GM12878 (cell line): ENCODE measurements at regions of chr17 and their contacts with region 1.

Region 1: GRCh38 chr17:8103549-8103948 is 14.8 kb downstream of the ALOXE3 start:
- DNase-seq: no peak
- ATAC-seq: no peak
- H3K4me3 ChIP-seq: no peak overlapping the region
- H3K27ac ChIP-seq: no peak overlapping the region
- H3K4me1 ChIP-seq: no peaks in the 10 kb centered on the region; the same call in 1 of the 2 replicates
- H3K27me3 ChIP-seq: no peaks in the 10 kb centered on the region
- CTCF ChIP-seq: no peak
- EP300 ChIP-seq: no peak
- POLR2A ChIP-seq: no peak
- RAD21 ChIP-seq: no peak

Region 2: DNA sequence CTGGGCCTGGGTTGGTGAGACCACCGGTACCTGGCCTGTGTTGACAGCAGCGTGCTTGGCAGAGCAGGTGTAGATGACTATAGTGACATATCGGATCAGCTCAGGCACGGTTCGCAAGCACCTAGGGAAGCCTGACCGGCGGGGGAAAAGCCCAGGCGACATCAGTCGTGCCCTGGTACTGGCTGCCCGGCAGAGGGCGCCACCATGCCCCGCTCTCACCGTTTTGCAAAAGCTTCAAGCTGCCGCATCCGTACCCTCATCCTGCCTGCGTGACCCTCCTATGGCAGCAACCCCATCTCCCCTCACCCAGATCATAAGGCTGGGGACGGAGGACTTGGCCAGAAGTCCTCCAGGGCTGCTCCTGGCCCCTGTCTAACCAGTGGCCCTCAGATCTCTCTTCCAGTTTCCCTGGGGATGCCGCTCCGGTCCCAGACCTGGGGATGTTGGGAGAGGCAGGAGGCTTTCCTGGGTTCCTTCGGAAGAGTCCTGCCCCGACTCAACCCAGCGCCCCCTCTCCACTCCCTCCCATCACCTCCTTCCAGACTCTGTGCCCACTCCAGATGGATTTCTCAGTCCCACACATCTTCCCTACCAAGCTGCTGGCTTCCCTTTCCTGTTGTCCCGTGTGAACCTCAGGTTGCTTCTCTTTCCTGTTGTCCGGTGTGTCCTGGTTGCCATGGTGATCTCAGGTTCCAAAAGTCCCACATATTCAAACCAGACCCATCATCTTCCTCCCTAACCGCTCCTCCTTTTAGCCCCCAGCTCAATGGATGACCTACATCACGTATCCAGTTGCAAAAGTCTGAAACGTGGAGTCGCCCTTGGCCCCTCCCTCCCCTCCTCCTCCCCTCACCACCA is 29.7 kb before region 1 on chr17:
- CTCF ChIA-PET with region 1: interaction called, 18 read pairs
- POLR2A ChIA-PET with region 1: no interaction called
- RAD21 ChIA-PET with region 1: interaction called, 8 read pairs
- SMC1A ChIA-PET with region 1: interaction called, 4 read pairs
- in situ Hi-C with region 1: no loop called
- intact Hi-C with region 1: no loop called
- DNase-seq: no peak
- ATAC-seq: peak; percentile 97
- H3K4me3 ChIP-seq: no peak overlapping the region
- H3K27ac ChIP-seq: no peak overlapping the region
- H3K4me1 ChIP-seq: no peaks in the 10 kb centered on the region
- H3K27me3 ChIP-seq: peaks cover 8 to 20% of the 10 kb centered on the region in 2 experiments
- CTCF ChIP-seq: peak; percentile 86 to 95 (median 93)
- EP300 ChIP-seq: no peak
- POLR2A ChIP-seq: no peak
- RAD21 ChIP-seq: no peak